ENCODE measurements at regions of chr11 and their contacts with region 1.

Region 1: DNA sequence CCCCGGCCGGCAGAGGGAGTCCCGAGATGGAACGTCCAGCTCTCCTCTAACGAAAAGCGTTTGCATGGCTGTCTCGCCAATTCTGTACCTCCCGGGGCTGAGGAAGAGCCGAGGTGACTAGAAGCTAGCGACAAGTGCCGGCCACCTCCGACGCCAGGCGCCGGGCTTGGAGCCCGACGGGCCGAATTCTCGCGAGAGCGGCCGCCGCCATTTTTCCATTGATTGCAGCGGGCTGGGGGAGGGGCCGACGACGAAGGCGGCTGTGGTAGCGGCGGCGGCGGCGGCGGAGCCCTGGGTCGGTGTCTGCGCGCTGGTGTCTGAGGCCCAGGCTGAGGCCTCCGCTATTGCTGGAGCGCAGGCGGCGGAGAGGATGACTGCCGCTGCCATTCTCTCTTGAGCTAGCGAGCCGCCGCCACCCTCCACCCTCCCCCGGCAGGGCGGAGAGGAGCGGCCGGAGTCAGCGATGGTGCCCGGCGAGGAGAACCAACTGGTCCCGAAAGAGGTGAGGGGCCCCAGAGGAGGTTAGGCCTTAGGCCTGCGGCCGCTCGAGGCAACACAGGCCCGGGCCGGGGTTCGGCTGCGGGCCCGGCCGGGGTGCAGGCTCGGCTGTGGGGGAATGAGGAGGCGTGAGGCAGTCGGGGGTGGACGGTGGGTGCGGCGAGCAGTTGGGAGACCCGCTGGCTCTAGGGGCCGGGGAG is at the start of gene USP47:
- DNase-seq: peak; percentile 78 to 97 (median 87)

Region 2: DNA sequence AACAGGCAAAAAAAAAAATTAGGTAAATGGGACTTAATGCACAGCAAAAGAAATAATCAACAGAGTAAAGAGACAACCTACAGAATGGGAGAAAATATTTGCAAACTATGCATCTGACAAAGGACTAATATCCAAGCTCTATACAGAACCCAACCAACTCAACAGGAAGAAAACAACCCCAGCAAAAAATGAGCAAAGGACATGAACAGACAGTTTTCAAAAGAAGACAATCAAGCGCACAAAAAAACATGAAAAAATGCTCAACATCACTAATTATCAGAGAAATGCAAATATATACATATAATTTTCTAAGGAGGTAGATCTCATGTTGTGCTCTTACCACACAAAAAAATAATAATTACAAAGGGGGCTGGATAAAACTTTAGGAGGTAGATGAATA is 36.6 kb before region 1 on chr11:
- intact Hi-C with region 1: loop called (anchors 2 kb)
- DNase-seq: no peak

Measured in posterior cingulate gyrus (tissue), 11 donors.